ENCODE measurements at regions of chr11 and their contacts with region 1.

Region 1: GRCh38 chr11:65141896-65142494 is 7.7 kb upstream of the SYVN1 start:
- DNase-seq: peak in 1 of 7 donors; percentile 9
- H3K4me3 ChIP-seq: no peak overlapping the region
- H3K27ac ChIP-seq: no peak overlapping the region
- H3K4me1 ChIP-seq: no peaks in the 10 kb centered on the region
- H3K27me3 ChIP-seq: no peaks in the 10 kb centered on the region
- CTCF ChIP-seq: no peak
- POLR2A ChIP-seq: no peak

Region 2: DNA sequence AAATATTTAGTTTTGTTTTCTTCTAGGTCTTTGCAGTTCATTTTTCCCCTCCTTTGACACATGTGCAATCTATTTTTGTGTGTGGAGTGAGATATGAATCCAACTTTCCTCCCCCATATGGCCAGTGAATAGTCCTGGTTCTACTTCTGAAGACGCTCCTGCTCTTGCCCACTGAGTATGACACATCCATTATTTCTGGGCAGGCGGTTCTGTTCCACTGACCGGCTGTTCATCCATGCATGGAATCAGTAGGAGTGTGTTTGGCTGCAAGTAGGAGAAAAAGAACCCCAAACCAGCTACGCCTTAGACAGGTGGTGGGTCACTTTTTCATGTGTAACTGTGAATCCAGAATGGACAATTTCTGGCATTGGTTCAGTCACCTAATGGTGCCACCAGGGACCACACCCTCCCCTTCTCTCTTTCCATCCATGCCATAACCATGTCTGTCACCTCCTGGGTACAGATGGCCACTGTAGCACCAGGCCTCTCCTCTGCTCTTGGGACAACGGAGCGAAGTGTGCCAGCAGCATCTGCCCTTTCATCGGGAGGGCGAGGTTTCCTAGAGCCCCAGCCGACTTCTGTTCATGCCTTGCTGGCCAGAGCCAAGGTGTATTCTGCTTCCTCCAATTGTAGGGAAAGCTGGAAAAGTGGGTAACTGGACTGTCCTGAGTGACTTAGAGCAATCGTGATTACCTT is 618.4 kb before region 1 on chr11:
- intact Hi-C with region 1: loop called in 1 of 2 experiments (anchors 10 kb)
- DNase-seq: no peak
- H3K4me3 ChIP-seq: no peak overlapping the region
- H3K27ac ChIP-seq: no peak overlapping the region
- H3K4me1 ChIP-seq: no peaks in the 10 kb centered on the region
- H3K27me3 ChIP-seq: peaks cover 10% of the 10 kb centered on the region
- CTCF ChIP-seq: no peak
- POLR2A ChIP-seq: no peak